ENCODE measurements at regions of chr2 and their contacts with region 1.

Region 1: DNA sequence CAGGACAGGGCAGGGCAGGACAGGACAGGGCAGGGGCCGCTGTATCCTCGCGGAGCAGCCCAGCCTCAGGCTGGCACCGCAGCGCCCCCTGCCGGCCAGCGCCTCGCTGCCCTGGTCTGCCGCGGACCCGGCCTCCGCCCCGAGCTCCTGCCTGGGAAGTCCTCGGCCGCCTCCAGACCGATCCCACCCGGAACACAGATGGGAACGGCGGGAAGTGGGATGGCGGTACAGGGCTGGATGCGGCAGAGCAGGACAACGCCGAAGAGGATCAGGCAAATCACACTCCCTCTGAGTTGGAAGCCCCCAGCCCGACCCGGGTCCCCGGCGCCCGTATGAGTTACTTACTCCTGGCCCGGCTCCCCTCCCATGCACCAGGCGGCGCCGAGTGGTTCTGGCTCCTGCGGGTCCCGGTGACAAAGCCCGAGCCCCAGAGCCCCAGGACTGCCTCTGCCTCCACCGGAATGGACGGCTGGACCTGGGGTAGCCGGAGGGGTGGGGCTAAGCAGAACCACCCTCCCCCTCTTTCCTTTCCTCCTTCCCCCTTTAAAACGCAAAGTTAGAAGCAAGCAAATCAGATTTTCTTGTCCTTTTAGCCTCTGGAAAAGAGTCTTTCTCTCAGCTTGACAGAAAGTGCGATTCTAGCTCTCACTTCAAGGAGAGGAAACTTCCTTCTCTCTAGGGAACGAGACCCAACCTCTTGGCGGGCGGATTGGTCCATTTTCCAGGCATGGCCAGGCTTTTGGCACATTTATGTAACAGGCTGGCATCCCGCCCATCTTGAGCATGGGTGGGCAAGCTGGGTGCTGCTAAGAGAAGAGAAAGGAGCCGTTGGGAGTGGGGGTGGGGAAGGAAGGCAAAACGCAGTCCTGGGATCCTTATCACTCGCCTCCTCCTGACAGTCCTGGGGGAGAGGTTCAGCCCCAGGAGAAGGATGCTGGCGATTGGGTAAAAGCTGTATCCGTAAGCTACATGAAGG is at the start of gene TP53I3:
- DNase-seq: peak; percentile 78
- H3K27ac ChIP-seq: peak within 1 kb of the TSS; percentile 97
- CTCF ChIP-seq: peak; percentile 96

Region 2: GRCh38 chr2:24123195-24123921 is 38.7 kb after region 1 on chr2 and contains the starts of genes FAM228B and PFN4:
- CTCF ChIA-PET with region 1: interaction called, 10 read pairs
- POLR2A ChIA-PET with region 1: no interaction called
- DNase-seq: peak; percentile 79
- H3K27ac ChIP-seq: peak within 1 kb of the TSS; percentile 72
- CTCF ChIP-seq: no peak